Thyroid gland (tissue), 4 donors: ENCODE measurements at regions of chr6 and their contacts with region 1.

Region 1: DNA sequence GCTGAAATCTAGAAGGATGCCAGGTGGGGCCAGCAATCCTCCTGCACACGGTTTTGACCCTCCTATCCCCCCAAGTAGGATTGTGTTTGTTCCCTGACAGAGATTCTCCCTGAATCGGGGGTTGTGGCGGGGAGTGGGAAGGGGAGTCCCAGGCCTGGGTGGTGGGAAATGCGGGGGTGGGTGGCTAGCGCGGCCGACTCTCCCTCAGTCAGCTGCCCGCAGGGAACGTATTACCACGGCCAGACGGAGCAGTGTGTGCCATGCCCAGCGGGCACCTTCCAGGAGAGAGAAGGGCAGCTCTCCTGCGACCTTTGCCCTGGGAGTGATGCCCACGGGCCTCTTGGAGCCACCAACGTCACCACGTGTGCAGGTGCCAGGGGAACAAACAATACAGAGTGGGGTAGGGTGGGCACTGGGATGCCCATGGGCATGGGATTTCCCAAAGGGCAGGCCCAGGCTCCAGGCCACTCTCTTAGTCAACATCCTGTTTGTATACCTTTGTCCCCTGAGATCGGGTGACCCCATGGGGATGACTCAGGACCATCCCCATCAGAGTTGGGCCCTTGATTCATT is 16.1 kb upstream of the ZNF76 start:
- DNase-seq: no peak
- H3K4me3 ChIP-seq: no peak overlapping the region
- H3K27ac ChIP-seq: no peak overlapping the region
- H3K4me1 ChIP-seq: peaks cover 25 to 39% of the 10 kb centered on the region in 2 donors
- H3K27me3 ChIP-seq: no peaks in the 10 kb centered on the region
- CTCF ChIP-seq: no peak
- POLR2A ChIP-seq: no peak

Region 2: DNA sequence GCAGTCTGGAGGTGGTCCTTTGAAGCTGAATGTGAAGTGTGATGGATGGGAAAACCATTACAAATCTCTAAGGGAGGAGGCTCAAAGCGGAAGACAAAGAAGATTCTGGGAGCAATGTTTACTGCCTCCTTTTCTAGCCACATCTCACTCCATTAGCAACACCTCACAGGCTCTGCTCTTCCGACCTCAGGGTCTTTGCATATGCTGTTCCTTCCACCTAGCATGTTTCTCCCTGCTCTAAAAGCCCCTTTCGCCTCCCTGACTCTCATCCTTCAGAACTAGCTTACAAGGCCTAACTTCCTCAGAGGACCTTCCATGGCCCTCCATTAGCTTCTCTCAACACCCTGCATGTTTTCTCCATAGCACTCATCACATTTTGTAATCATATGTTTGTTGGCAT is 97.7 kb before region 1 on chr6:
- intact Hi-C with region 1: loop called (anchors 2 kb)
- DNase-seq: no peak
- H3K4me3 ChIP-seq: no peak overlapping the region
- H3K27ac ChIP-seq: no peak overlapping the region
- H3K4me1 ChIP-seq: peaks cover 14 to 32% of the 10 kb centered on the region in 2 donors
- H3K27me3 ChIP-seq: no peaks in the 10 kb centered on the region
- CTCF ChIP-seq: no peak
- POLR2A ChIP-seq: no peak

Region 3: GRCh38 chr6:35195120-35195780 is 48.2 kb before region 1 on chr6:
- intact Hi-C with region 1: no loop called
- DNase-seq: no peak
- H3K4me3 ChIP-seq: no peak overlapping the region
- H3K27ac ChIP-seq: no peak overlapping the region
- H3K4me1 ChIP-seq: no peaks in the 10 kb centered on the region
- H3K27me3 ChIP-seq: no peaks in the 10 kb centered on the region
- CTCF ChIP-seq: no peak
- POLR2A ChIP-seq: no peak

Region 4: DNA sequence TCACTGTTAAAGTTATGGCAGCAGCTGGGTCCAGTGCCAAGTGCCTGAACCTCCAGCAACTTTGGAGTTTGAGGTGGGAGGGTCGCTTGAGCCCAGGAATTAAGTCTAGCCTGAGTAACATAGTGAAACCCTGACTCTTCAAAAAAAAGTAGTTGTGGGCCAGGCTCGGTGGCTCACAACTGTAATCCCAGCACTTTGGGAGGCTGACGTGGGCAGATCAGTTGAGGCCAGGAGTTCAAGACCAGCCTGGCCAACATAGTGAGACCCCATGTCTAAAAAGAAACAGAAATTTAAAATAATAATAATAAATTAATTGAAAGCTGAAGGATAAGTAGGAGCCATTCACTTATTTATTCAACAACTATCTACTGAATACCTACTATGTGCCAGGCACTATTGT is 411.4 kb after region 1 on chr6:
- intact Hi-C with region 1: no loop called
- DNase-seq: no peak
- H3K4me3 ChIP-seq: no peak overlapping the region
- H3K27ac ChIP-seq: no peak overlapping the region
- H3K4me1 ChIP-seq: peaks cover 0 to 6% of the 10 kb centered on the region in 2 donors
- H3K27me3 ChIP-seq: no peaks in the 10 kb centered on the region
- CTCF ChIP-seq: no peak
- POLR2A ChIP-seq: no peak